K562 (cell line): ENCODE measurements at regions of chr20 and their contacts with region 1.

Region 1: GRCh38 chr20:32779500-32780211 is 17.5 kb downstream of the DNMT3B start:
- DNase-seq: peak; percentile 24 to 90 (median 81)
- ATAC-seq: peak; percentile 44; the same call in 1 of the 3 replicates
- H3K4me3 ChIP-seq: no peak overlapping the region
- H3K27ac ChIP-seq: no peak overlapping the region
- H3K4me1 ChIP-seq: peaks cover 5 to 12% of the 10 kb centered on the region in 2 experiments; a peak in 3 of 5 replicates
- H3K27me3 ChIP-seq: no peaks in the 10 kb centered on the region
- CTCF ChIP-seq: no peak
- EP300 ChIP-seq: no peak
- POLR2A ChIP-seq: no peak
- RAD21 ChIP-seq: no peak

Region 2: GRCh38 chr20:32509639-32510066 is 270.0 kb before region 1 on chr20:
- CTCF ChIA-PET with region 1: no interaction called
- POLR2A ChIA-PET with region 1: interaction called, 4 read pairs
- in situ Hi-C with region 1: loop called (anchors 10 kb)
- intact Hi-C with region 1: no loop called
- DNase-seq: no peak
- ATAC-seq: no peak
- H3K4me3 ChIP-seq: no peak overlapping the region
- H3K27ac ChIP-seq: no peak overlapping the region
- H3K4me1 ChIP-seq: peaks cover 22 to 24% of the 10 kb centered on the region in 2 experiments
- H3K27me3 ChIP-seq: no peaks in the 10 kb centered on the region
- CTCF ChIP-seq: peak in 1 of 3 experiments; percentile 1; a peak in 1 of 6 replicates
- EP300 ChIP-seq: no peak
- POLR2A ChIP-seq: no peak
- RAD21 ChIP-seq: no peak

Region 3: GRCh38 chr20:32674362-32674789 is 105.3 kb before region 1 on chr20:
- CTCF ChIA-PET with region 1: interaction called, 66 read pairs
- POLR2A ChIA-PET with region 1: interaction called, 4 read pairs
- in situ Hi-C with region 1: no loop called
- intact Hi-C with region 1: loop called (anchors 1 kb)
- DNase-seq: peak; percentile 78 to 83 (median 82)
- ATAC-seq: peak; percentile 77
- H3K4me3 ChIP-seq: no peak overlapping the region
- H3K27ac ChIP-seq: peak overlapping the region; percentile 67
- H3K4me1 ChIP-seq: peaks cover 35 to 43% of the 10 kb centered on the region in 2 experiments
- H3K27me3 ChIP-seq: no peaks in the 10 kb centered on the region
- CTCF ChIP-seq: peak; percentile 83 to 98 (median 91)
- EP300 ChIP-seq: no peak
- POLR2A ChIP-seq: no peak
- RAD21 ChIP-seq: peak; percentile 93 to 98

Region 4: DNA sequence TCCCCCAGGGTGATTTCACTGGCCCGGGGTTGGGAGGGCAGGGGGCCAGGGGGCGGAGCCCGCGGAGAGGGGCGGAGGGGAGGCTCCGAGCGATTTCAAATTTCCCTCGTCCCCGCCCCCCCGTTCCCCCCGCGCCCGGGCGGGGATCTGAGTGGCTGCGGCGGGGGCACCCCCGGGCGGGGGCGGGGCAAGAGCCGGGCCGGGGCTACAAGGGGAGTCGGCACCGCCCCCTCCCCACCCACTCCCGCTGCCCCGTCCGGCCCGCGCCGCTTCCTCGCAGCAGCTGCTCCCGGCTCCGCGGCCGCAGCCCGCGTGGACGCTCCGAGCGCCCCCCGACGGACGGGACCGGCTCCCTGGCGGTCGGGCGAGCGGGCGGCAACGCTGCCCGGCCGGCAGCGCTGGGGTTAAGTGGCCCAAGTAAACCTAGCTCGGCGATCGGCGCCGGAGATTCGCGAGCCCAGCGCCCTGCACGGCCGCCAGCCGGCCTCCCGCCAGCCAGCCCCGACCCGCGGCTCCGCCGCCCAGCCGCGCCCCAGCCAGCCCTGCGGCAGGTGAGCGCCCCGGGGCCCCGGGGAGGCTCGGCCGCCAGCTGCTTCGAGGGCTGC is 17.4 kb before region 1 on chr20 and contains the start of gene DNMT3B:
- CTCF ChIA-PET with region 1: no interaction called
- POLR2A ChIA-PET with region 1: interaction called, 11 read pairs
- in situ Hi-C with region 1: no loop called
- intact Hi-C with region 1: no loop called
- DNase-seq: peak; percentile 94 to 99 (median 99)
- ATAC-seq: peak; percentile 78
- H3K4me3 ChIP-seq: peak within 1 kb of the TSS; percentile 90
- H3K27ac ChIP-seq: peak within 1 kb of the TSS; percentile 86
- H3K4me1 ChIP-seq: peaks cover 27 to 55% of the 10 kb centered on the region in 2 experiments; a peak in 4 of 5 replicates
- H3K27me3 ChIP-seq: no peaks in the 10 kb centered on the region
- CTCF ChIP-seq: peak in 2 of 3 experiments; percentile 47 to 67; a peak in 4 of 6 replicates
- EP300 ChIP-seq: peak; percentile 60; the same call in 1 of the 2 replicates
- POLR2A ChIP-seq: no peak; the same call in 1 of the 2 replicates
- RAD21 ChIP-seq: peak; percentile 47 to 70; a peak in 3 of 4 replicates
- polyA plus RNA-seq, gene DNMT3B: 9.3 to 11.5 TPM

Region 5: DNA sequence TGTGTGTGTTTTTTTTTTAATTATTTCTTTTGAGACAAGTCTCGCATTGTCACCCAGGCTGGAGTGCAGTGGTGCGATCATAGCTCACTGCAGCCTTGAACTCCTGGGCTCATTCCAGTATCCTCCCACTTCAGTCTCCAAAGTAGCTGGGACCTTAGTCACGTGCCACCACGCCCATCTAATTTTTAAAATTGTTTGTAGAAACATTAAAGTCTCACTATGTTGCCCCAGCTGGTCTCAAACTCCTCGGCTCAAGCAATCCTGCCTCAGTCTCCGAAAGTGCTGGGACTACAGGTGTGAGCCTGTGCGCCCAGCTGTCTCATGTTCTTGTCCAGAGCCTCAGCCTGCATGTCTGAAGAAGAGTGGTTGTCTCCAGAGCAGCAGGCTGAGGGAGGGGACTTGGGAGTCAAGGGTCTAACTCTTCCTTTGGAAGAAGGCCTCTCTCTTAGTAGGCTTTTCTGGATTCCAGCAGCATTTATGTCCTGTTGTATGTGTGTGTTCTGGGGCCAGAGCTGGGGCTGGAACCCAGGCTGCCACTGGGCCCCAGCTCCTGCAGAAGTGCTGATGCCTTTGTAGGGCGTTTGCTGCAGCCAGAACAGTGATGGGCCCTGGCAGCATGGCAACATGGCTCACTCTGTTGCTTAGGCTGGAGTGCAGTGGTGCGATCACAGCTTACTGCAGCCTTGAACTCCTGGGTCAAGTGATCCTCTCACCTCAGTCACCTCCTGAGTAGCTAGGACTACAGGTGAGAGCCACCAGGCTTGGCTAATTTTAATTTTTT is 12.0 kb before region 1 on chr20:
- CTCF ChIA-PET with region 1: no interaction called
- POLR2A ChIA-PET with region 1: interaction called, 11 read pairs
- in situ Hi-C with region 1: no loop called
- intact Hi-C with region 1: no loop called
- DNase-seq: no peak
- ATAC-seq: no peak
- H3K4me3 ChIP-seq: no peak overlapping the region
- H3K27ac ChIP-seq: no peak overlapping the region; the same call in 2 of the 3 replicates
- H3K4me1 ChIP-seq: peaks cover 23 to 33% of the 10 kb centered on the region in 2 experiments; a peak in 4 of 5 replicates
- H3K27me3 ChIP-seq: no peaks in the 10 kb centered on the region
- CTCF ChIP-seq: no peak
- EP300 ChIP-seq: no peak
- POLR2A ChIP-seq: no peak
- RAD21 ChIP-seq: no peak

Region 6: GRCh38 chr20:34689486-34689885 is 1909.8 kb after region 1 on chr20:
- CTCF ChIA-PET with region 1: no interaction called
- POLR2A ChIA-PET with region 1: no interaction called
- in situ Hi-C with region 1: no loop called
- intact Hi-C with region 1: no loop called
- DNase-seq: no peak
- ATAC-seq: peak; percentile 31; the same call in 1 of the 3 replicates
- H3K4me3 ChIP-seq: no peak overlapping the region
- H3K27ac ChIP-seq: no peak overlapping the region
- H3K4me1 ChIP-seq: peaks cover 0 to 8% of the 10 kb centered on the region in 2 experiments; a peak in 3 of 5 replicates
- H3K27me3 ChIP-seq: no peaks in the 10 kb centered on the region
- CTCF ChIP-seq: no peak
- EP300 ChIP-seq: no peak
- POLR2A ChIP-seq: no peak
- RAD21 ChIP-seq: no peak